K562 (cell line): ENCODE measurements at regions of chr14 and their contacts with region 1.

Region 1: GRCh38 chr14:22900081-22900799 is 17.2 kb downstream of the REM2 start:
- DNase-seq: peak; percentile 71 to 91 (median 79)
- ATAC-seq: peak; percentile 80
- H3K4me3 ChIP-seq: no peak overlapping the region
- H3K27ac ChIP-seq: no peak overlapping the region
- H3K4me1 ChIP-seq: peaks cover 5 to 39% of the 10 kb centered on the region in 2 experiments; a peak in 2 of 5 replicates
- H3K27me3 ChIP-seq: no peaks in the 10 kb centered on the region
- CTCF ChIP-seq: peak; percentile 73 to 84 (median 83)
- EP300 ChIP-seq: no peak
- POLR2A ChIP-seq: no peak
- RAD21 ChIP-seq: peak; percentile 57 to 68

Region 2: DNA sequence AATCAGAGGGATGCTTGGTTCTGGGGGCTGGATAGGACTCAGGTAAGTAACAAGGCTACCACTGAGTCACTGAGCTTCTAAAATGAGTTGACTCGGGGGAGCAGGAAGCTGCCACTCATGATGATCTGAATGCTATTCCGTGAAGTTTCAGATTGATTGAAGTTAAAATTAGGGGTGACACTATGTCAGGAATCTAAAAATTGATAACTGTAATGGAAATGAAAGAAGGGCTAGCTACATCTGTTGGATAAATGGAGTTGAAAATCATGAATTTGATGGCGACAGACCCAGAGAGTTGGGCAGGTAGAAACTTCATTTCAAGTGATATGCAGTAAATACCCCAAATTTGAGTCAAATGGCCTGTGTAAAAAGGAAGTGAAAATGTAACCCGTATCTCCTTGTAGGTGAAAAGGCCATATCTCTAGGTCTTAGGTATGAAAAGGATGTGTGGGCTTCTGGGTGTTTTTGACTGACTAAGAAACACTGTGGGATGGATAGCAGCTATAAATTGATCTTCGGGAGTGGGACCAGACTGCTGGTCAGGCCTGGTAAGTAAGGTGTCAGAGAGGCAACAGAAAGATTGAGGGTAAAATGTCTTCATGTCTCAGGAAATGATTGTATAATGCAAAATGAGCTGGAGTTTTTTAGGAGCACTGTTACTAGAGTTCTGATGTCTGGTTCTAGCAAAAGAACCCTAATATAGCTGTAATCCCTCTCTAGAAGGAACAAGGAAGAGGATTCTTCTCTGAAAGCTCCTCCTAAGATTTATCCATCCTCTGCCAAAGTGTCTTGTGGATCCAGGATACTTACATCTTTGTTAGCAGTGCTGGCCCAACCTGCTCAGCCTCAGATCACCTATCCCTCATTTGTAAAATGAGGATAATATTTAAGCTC is 368.5 kb before region 1 on chr14:
- CTCF ChIA-PET with region 1: no interaction called
- POLR2A ChIA-PET with region 1: no interaction called
- in situ Hi-C with region 1: no loop called
- intact Hi-C with region 1: no loop called
- DNase-seq: no peak
- ATAC-seq: no peak
- H3K4me3 ChIP-seq: no peak overlapping the region
- H3K27ac ChIP-seq: no peak overlapping the region
- H3K4me1 ChIP-seq: peaks cover 0 to 4% of the 10 kb centered on the region in 2 experiments; a peak in 2 of 5 replicates
- H3K27me3 ChIP-seq: no peaks in the 10 kb centered on the region
- CTCF ChIP-seq: no peak
- EP300 ChIP-seq: no peak
- POLR2A ChIP-seq: no peak
- RAD21 ChIP-seq: no peak

Region 3: DNA sequence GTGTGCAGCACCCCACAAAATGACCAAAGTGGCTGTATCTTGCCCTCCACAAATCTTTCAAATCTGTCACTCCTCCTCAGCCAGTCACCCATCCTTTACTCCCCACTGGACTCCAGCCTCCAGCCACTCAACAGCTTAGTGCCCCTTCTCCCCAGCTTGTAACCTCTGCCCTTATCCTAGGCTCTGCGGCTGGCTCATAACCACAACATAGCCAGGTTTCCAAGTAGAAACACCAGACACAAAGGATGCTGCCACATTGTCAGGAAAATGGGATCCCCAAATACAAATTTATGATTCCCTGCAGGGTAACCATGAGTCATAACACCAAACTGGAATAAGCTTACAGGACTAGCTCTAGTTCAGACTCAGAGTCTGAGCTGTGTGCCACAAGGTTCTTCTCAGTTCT is 118.7 kb before region 1 on chr14:
- CTCF ChIA-PET with region 1: interaction called, 8 read pairs
- POLR2A ChIA-PET with region 1: no interaction called
- in situ Hi-C with region 1: no loop called
- intact Hi-C with region 1: loop called (anchors 1 kb)
- DNase-seq: no peak
- ATAC-seq: no peak
- H3K4me3 ChIP-seq: no peak overlapping the region
- H3K27ac ChIP-seq: no peak overlapping the region
- H3K4me1 ChIP-seq: peaks cover 0 to 8% of the 10 kb centered on the region in 2 experiments; a peak in 3 of 5 replicates
- H3K27me3 ChIP-seq: no peaks in the 10 kb centered on the region
- CTCF ChIP-seq: no peak
- EP300 ChIP-seq: no peak
- POLR2A ChIP-seq: no peak
- RAD21 ChIP-seq: no peak

Region 4: DNA sequence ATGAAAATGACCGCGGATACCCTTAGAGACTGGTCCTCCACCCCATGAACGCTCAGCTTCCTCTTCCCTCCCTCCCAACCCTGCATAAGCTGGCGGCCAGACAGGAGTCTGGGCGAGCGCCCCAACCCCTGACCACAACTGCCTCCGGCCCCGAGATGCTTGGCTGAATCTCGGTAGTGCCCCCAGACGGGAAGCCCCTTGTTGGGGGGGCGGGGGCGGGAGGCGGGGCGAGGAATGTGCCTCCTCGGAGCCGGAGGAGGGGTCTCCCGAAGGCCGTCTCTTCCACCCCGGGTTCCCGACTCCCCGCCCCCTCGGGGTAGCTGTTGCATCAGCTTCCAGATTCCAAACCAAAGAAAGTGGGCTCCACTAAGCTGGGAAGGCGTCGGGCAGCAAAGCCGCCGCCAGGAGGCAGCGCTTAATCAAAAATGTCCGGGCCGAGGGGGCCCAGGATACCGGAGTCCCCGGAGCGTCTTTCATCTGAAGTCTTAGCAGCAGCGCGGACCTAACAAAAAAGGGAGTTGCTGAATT is 77.6 kb before region 1 on chr14:
- CTCF ChIA-PET with region 1: interaction called, 4 read pairs
- POLR2A ChIA-PET with region 1: interaction called, 10 read pairs
- in situ Hi-C with region 1: no loop called
- intact Hi-C with region 1: loop called (anchors 1 kb)
- DNase-seq: peak; percentile 77 to 87 (median 82)
- ATAC-seq: peak; percentile 88
- H3K4me3 ChIP-seq: no peak overlapping the region
- H3K27ac ChIP-seq: no peak overlapping the region
- H3K4me1 ChIP-seq: peaks cover 18 to 30% of the 10 kb centered on the region in 2 experiments; a peak in 4 of 5 replicates
- H3K27me3 ChIP-seq: no peaks in the 10 kb centered on the region
- CTCF ChIP-seq: peak; percentile 89 to 95 (median 91)
- EP300 ChIP-seq: 0 out of 2 replicates have a peak, but pooled peaks have one; percentile 5
- POLR2A ChIP-seq: no peak
- RAD21 ChIP-seq: peak; percentile 92 to 94

Region 5: GRCh38 chr14:23047034-23047634 is 146.9 kb after region 1 on chr14:
- CTCF ChIA-PET with region 1: no interaction called
- POLR2A ChIA-PET with region 1: no interaction called
- in situ Hi-C with region 1: no loop called
- intact Hi-C with region 1: no loop called
- DNase-seq: no peak
- ATAC-seq: no peak
- H3K4me3 ChIP-seq: no peak overlapping the region
- H3K27ac ChIP-seq: no peak overlapping the region
- H3K4me1 ChIP-seq: peaks cover 15 to 33% of the 10 kb centered on the region in 2 experiments
- H3K27me3 ChIP-seq: no peaks in the 10 kb centered on the region
- CTCF ChIP-seq: no peak
- EP300 ChIP-seq: no peak
- POLR2A ChIP-seq: no peak
- RAD21 ChIP-seq: no peak

Region 6: GRCh38 chr14:23457587-23458445 is 557.6 kb after region 1 on chr14:
- CTCF ChIA-PET with region 1: no interaction called
- POLR2A ChIA-PET with region 1: no interaction called
- in situ Hi-C with region 1: no loop called
- intact Hi-C with region 1: no loop called
- DNase-seq: no peak
- ATAC-seq: no peak
- H3K4me3 ChIP-seq: no peak overlapping the region
- H3K27ac ChIP-seq: no peak overlapping the region
- H3K4me1 ChIP-seq: peaks cover 3 to 10% of the 10 kb centered on the region in 2 experiments; a peak in 2 of 5 replicates
- H3K27me3 ChIP-seq: no peaks in the 10 kb centered on the region
- CTCF ChIP-seq: no peak
- EP300 ChIP-seq: no peak
- POLR2A ChIP-seq: no peak
- RAD21 ChIP-seq: no peak